Mammary epithelial cell (primary cell): ENCODE measurements at regions of chr7 and their contacts with region 1.

Region 1: GRCh38 chr7:80794631-80795573 is 123.9 kb downstream of the SEMA3C start:
- DNase-seq: no peak
- H3K4me3 ChIP-seq: no peak overlapping the region
- H3K27ac ChIP-seq: no peak overlapping the region
- H3K4me1 ChIP-seq: no peaks in the 10 kb centered on the region
- H3K27me3 ChIP-seq: no peaks in the 10 kb centered on the region
- CTCF ChIP-seq: no peak

Region 2: DNA sequence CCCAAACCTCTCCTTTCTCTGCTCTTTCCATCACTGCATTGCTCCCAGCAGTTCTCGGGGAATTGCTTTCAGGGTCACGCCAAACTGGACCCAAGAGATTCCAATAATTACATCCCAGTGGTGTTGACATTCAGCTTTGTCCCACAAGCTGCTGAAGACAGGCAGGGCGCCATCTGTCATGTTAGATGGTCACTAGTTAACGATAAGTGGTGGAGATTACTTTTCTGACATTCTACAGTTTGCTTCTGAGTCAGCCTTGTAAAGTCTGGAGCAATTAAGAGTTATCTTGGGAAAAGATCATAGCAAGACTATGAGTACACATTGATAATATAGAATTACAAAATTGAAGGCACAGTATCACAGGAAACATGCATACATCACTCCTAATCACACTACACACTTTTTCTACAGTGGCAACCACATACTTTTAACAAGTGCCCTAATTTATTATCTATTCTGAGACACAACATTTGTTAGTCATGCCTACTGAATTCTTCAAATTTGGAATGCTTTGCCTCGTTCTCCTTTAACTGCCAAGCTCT is 82.0 kb after region 1 on chr7:
- CTCF ChIA-PET with region 1: no interaction called
- dilution Hi-C with region 1: loop called (anchors 5 kb)
- in situ Hi-C with region 1: no loop called
- intact Hi-C with region 1: no loop called
- DNase-seq: peak; percentile 68
- H3K4me3 ChIP-seq: no peak overlapping the region
- H3K27ac ChIP-seq: no peak overlapping the region
- H3K4me1 ChIP-seq: peaks cover 2% of the 10 kb centered on the region
- H3K27me3 ChIP-seq: no peaks in the 10 kb centered on the region
- CTCF ChIP-seq: no peak